ENCODE measurements at regions of chr10 and their contacts with region 1.

Region 1: DNA sequence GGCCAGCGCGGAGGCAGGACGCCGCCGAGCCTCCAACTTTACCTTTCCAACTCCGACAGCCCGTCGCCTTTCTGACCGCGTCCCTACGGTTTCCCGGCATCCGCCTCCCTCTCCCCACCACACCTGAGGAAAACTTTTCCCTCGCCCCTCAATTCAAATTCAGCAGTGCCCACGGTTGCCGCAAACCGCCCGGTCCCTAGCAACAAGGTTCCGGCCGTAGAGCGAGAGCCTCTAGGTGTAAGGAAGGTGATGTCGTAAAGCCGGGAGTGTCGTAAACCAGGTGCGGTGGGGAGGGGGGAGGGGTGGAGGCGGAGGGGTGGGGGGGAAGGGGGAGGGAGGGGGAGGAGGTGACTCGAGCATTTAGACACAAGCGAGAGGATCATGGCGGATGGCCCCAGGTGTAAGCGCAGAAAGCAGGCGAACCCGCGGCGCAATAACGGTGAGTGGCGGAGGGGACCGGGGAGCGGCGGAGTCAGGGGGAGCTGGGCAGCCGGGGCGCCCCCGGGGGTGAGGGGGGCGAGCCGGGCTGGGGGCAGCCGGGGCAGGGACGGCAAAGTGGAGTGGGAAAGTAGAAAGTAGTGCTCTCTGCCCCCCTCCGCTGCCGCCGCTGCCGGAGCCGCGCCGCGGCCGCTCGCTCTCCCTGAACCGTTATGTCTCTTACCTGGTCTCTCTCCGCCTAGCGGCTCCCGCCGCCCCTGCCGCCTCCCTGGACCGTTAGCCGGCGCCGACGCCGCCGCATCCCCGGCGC is at the start of gene ZEB1:
- DNase-seq: peak; percentile 86
- H3K4me3 Mint-ChIP-seq: peak within 1 kb of the TSS; percentile 97
- H3K27ac Mint-ChIP-seq: peak within 1 kb of the TSS; percentile 100
- H3K4me1 Mint-ChIP-seq: peaks cover 60% of the 10 kb centered on the region
- H3K27me3 Mint-ChIP-seq: no peaks in the 10 kb centered on the region
- total RNA-seq, gene ZEB1: 70.8 and 79.8 TPM in 2 replicates

Region 2: GRCh38 chr10:30701451-30702173 is 617.4 kb before region 1 on chr10:
- intact Hi-C with region 1: loop called (anchors 2 kb)
- DNase-seq: peak; percentile 74
- H3K4me3 Mint-ChIP-seq: peak overlapping the region; percentile 73
- H3K27ac Mint-ChIP-seq: peak overlapping the region; percentile 94
- H3K4me1 Mint-ChIP-seq: peaks cover 91% of the 10 kb centered on the region
- H3K27me3 Mint-ChIP-seq: no peaks in the 10 kb centered on the region

Region 3: DNA sequence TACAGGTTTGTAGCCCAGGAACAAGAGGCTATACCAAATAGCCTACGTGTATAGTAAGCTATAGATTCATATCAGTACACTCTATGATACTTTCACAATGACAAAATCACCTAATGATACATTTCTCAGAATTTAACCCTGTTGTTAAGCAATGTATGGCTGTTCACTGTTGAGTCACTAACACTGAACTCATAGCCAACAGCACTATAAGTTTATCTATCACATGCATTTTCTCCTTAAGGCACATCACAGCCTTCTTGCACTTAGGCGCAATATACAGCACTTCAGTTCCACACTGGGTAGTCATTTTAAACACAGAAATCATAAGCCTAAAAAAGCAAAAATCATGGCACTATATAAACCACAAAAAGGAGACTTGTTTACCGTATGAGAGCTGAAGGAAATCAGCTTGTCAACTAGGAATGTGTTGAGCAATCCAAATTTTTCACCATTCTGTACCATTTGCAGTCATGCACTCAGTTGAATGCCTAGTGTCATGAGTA is 332.9 kb before region 1 on chr10:
- intact Hi-C with region 1: loop called (anchors 5 kb)
- DNase-seq: no peak
- H3K4me3 Mint-ChIP-seq: peak overlapping the region; percentile 5
- H3K27ac Mint-ChIP-seq: peak overlapping the region; percentile 85
- H3K4me1 Mint-ChIP-seq: peaks cover 13% of the 10 kb centered on the region
- H3K27me3 Mint-ChIP-seq: no peaks in the 10 kb centered on the region

Region 4: GRCh38 chr10:31101123-31101522 is 217.9 kb before region 1 on chr10:
- intact Hi-C with region 1: loop called (anchors 1 kb)
- DNase-seq: peak; percentile 72
- H3K4me3 Mint-ChIP-seq: peak overlapping the region; percentile 51
- H3K27ac Mint-ChIP-seq: peak overlapping the region; percentile 94
- H3K4me1 Mint-ChIP-seq: peaks cover 81% of the 10 kb centered on the region
- H3K27me3 Mint-ChIP-seq: no peaks in the 10 kb centered on the region

Region 5: DNA sequence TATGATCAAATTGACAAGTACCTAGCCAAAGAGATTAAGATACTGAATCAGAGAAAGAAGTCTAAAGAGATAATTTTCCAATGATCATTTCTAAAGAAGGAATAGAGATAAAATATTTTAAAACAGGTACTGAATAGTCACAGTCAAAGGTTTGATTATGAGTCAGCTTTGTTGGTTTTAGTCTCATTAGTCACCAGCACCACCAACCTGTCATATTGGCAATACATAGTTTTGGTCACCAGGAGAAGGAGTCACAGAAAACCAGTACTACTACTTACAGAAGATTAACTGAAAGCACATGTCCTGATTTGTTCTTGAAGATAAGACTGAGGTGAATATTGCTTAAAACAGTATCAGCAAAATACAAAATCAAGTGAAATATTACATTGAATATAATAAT is 34.5 kb after region 1 on chr10:
- intact Hi-C with region 1: loop called (anchors 1 kb)
- DNase-seq: no peak
- H3K4me3 Mint-ChIP-seq: no peak overlapping the region
- H3K27ac Mint-ChIP-seq: peak overlapping the region; percentile 85
- H3K4me1 Mint-ChIP-seq: peaks cover 37% of the 10 kb centered on the region
- H3K27me3 Mint-ChIP-seq: no peaks in the 10 kb centered on the region

Region 6: GRCh38 chr10:31426401-31426800 is 107.4 kb after region 1 on chr10:
- intact Hi-C with region 1: no loop called
- DNase-seq: no peak
- H3K4me3 Mint-ChIP-seq: no peak overlapping the region
- H3K27ac Mint-ChIP-seq: no peak overlapping the region
- H3K4me1 Mint-ChIP-seq: peaks cover 25% of the 10 kb centered on the region
- H3K27me3 Mint-ChIP-seq: no peaks in the 10 kb centered on the region

Region 7: DNA sequence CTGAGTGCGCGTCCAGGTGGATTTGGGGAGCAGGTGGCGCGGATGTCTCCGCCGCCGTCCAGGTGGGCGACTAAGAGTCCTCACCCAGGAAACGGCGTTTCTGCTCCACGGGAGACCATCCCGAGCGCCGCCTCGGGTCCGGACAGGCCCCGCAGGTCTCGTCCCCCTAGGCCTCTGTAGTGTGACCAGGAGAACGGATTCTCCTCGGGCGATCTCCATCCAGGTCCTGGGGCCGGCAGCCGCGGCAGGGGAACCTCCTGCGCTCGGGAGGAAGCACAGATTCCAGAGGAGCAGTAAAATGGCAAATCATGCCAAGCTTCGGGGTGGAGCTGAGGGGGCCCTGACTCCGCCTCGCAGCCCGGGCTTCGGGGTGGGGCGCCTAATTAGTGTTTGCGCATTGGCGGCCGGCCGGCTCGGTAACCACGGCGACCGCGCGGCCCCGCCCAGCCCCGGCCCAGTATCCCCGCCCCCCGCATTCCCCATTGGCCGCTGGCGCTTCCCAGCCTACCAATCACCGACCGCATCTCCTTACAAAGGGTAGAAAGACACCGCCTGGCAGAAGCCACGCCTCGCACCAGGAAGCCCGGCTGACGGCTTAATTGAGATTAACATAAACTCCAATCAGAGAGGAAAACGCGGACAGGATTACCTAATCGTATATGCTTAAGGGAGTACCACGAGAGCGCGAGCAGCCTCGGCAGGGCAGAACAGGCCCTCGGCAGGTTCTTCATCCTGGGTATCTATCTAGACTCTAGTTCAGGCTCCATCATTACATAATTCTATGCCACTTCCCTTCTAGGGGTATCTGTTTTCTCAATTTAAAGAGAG is 441.0 kb after region 1 on chr10:
- intact Hi-C with region 1: loop called (anchors 1 kb)
- DNase-seq: peak; percentile 92
- H3K4me3 Mint-ChIP-seq: peak overlapping the region; percentile 83
- H3K27ac Mint-ChIP-seq: peak overlapping the region; percentile 89
- H3K4me1 Mint-ChIP-seq: peaks cover 28% of the 10 kb centered on the region
- H3K27me3 Mint-ChIP-seq: peaks cover 5% of the 10 kb centered on the region

Measured in activated T-helper 1 cell treated with anti-CD3 and anti-CD28 coated beads, Interleukin-12 subunit alpha, Interleukin-12 subunit beta, Interleukin-2, Interleukin-4 antibody, amounts not matched to agents 30 ng/mL and 10 ng/mL and 1 ng/mL, durations not matched to agents 14 hours and 24 hours and 36 hours (primary cell).